ENCODE measurements at regions of chr9 and their contacts with region 1.

Region 1: GRCh38 chr9:10488937-10489336 is 123.9 kb downstream of the PTPRD start:
- DNase-seq: no peak
- H3K4me3 ChIP-seq: no peak overlapping the region
- H3K27ac ChIP-seq: no peak overlapping the region
- H3K4me1 ChIP-seq: no peaks in the 10 kb centered on the region
- H3K27me3 ChIP-seq: no peaks in the 10 kb centered on the region
- CTCF ChIP-seq: no peak
- POLR2A ChIP-seq: no peak

Region 2: DNA sequence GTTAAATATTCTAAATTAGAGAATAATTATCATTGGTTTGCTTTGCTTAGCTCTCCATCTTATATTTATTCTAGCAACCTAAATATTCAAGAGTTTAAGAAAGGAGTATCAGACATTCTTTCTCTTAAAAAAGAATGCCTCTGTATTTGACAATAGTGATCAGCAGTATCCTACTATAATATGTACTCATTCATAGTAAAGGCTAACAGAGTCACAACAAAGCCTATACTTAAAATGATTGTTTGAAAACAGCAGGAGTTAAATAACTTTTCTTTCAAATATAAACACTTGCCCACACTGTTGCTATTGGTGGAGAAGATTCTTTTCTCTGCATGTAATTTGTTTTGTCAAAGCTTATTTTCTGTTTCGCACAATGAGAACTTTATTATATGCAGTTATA is 54.5 kb before region 1 on chr9:
- intact Hi-C with region 1: loop called (anchors 10 kb)
- DNase-seq: no peak
- H3K4me3 ChIP-seq: no peak overlapping the region
- H3K27ac ChIP-seq: no peak overlapping the region
- H3K4me1 ChIP-seq: no peaks in the 10 kb centered on the region
- H3K27me3 ChIP-seq: no peaks in the 10 kb centered on the region
- CTCF ChIP-seq: no peak
- POLR2A ChIP-seq: no peak

Measured in esophagus squamous epithelium (tissue), 5 donors.